K562 (cell line): ENCODE measurements at regions of chr10 and their contacts with region 1.

Region 1: DNA sequence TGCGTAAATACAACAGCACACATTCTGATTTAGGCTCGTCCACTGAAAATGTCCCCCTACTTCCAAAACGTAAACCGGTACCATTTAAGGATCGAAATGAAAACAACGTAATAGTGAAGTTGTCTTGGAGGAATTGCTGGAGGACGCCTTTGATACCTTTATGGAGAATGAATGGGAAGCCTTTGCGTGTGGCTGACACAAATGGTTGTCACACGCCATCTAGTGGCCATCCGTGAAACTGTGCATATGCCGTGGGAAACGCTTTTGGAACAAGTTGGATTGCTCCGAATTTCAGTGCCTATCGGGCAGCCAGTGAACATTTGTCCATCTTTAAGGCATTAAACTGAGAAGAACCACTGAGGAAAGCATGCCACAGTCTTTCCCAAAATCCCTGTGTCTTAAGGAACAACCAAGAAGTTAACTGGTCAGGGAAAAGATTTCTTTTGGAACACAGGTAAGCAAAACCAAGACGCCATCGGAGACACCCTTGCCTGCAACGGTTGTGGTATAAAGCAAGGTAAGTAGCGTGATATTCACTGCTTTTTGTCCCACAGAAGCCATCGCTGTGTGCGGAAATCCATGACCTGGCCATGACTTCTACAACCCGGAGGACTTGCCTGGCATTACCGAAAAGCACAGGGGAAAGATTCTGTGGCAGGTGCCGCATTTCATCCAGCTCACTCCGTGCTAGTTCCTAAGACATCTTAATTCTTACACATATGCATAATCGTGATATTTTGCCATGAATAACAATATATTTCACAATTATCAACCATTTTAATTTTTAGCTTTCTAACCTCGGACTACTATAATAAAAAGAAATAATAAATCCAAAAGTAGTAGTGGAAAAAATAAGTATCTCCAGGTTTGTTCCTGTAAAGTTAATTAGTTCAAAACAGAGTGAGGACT is 100.6 kb downstream of the FAM204A start:
- DNase-seq: peak; percentile 33 to 74 (median 40)
- ATAC-seq: peak; percentile 70; the same call in 2 of the 3 replicates
- H3K4me3 ChIP-seq: no peak overlapping the region
- H3K27ac ChIP-seq: no peak overlapping the region
- H3K4me1 ChIP-seq: no peaks in the 10 kb centered on the region
- H3K27me3 ChIP-seq: peaks cover 2 to 21% of the 10 kb centered on the region in 2 experiments; a peak in 3 of 5 replicates
- CTCF ChIP-seq: peak; percentile 68 to 82 (median 78)
- EP300 ChIP-seq: no peak
- POLR2A ChIP-seq: no peak
- RAD21 ChIP-seq: peak; percentile 79 to 87

Region 2: DNA sequence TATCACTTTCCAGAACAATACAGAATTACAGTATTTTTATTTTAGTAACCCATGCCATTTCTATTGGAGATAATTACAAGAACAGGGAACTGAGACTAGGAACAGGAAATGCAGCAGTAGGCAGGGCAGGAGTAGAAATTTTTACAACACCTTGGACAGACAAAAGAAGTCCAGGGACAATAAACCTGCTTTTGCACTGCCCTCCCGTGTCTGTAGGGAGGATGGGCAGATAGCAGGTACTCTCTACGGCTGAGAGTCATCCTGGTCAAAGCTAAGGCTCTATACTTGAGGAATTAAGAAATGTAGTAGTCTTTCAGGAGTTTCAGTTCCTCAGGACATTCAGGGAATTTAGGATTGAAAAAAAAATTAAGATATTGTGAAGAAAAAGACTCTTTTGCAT is 1166.9 kb before region 1 on chr10:
- CTCF ChIA-PET with region 1: no interaction called
- POLR2A ChIA-PET with region 1: no interaction called
- in situ Hi-C with region 1: no loop called
- intact Hi-C with region 1: no loop called
- DNase-seq: no peak
- ATAC-seq: peak; percentile 51; the same call in 1 of the 3 replicates
- H3K4me3 ChIP-seq: no peak overlapping the region
- H3K27ac ChIP-seq: no peak overlapping the region
- H3K4me1 ChIP-seq: no peaks in the 10 kb centered on the region; a peak in 1 of 5 replicates
- H3K27me3 ChIP-seq: peaks cover 3 to 4% of the 10 kb centered on the region in 2 experiments; a peak in 2 of 5 replicates
- CTCF ChIP-seq: peak in 2 of 3 experiments; percentile 23 to 40; a peak in 2 of 6 replicates
- EP300 ChIP-seq: no peak
- POLR2A ChIP-seq: no peak
- RAD21 ChIP-seq: no peak

Region 3: GRCh38 chr10:117216611-117217195 is 1024.8 kb before region 1 on chr10:
- CTCF ChIA-PET with region 1: interaction called, 3 read pairs
- POLR2A ChIA-PET with region 1: no interaction called
- in situ Hi-C with region 1: loop called (anchors 25 kb)
- intact Hi-C with region 1: no loop called
- DNase-seq: peak; percentile 72 to 85 (median 82)
- ATAC-seq: peak; percentile 95
- H3K4me3 ChIP-seq: peak overlapping the region; percentile 26
- H3K27ac ChIP-seq: no peak overlapping the region
- H3K4me1 ChIP-seq: peaks cover 0 to 19% of the 10 kb centered on the region in 2 experiments; a peak in 3 of 5 replicates
- H3K27me3 ChIP-seq: peaks cover 5 to 33% of the 10 kb centered on the region in 2 experiments; a peak in 4 of 5 replicates
- CTCF ChIP-seq: peak; percentile 94 to 100 (median 100)
- EP300 ChIP-seq: no peak
- POLR2A ChIP-seq: no peak
- RAD21 ChIP-seq: peak; percentile 92 to 96

Region 4: GRCh38 chr10:117496616-117497028 is 744.9 kb before region 1 on chr10:
- CTCF ChIA-PET with region 1: interaction called, 3 read pairs
- POLR2A ChIA-PET with region 1: no interaction called
- in situ Hi-C with region 1: no loop called
- intact Hi-C with region 1: loop called (anchors 2 kb)
- DNase-seq: peak; percentile 67 to 81 (median 72)
- ATAC-seq: peak; percentile 97
- H3K4me3 ChIP-seq: no peak overlapping the region
- H3K27ac ChIP-seq: no peak overlapping the region
- H3K4me1 ChIP-seq: no peaks in the 10 kb centered on the region; a peak in 2 of 5 replicates
- H3K27me3 ChIP-seq: peaks cover under 1 to 33% of the 10 kb centered on the region in 2 experiments; a peak in 4 of 5 replicates
- CTCF ChIP-seq: peak; percentile 84 to 90 (median 88)
- EP300 ChIP-seq: no peak
- POLR2A ChIP-seq: no peak
- RAD21 ChIP-seq: peak; percentile 82 to 88

Region 5: GRCh38 chr10:117537436-117537903 is 704.0 kb before region 1 on chr10:
- CTCF ChIA-PET with region 1: interaction called, 10 read pairs
- POLR2A ChIA-PET with region 1: no interaction called
- in situ Hi-C with region 1: loop called (anchors 25 kb)
- intact Hi-C with region 1: loop called (anchors 2 kb)
- DNase-seq: peak; percentile 30 to 77 (median 74)
- ATAC-seq: peak; percentile 90
- H3K4me3 ChIP-seq: no peak overlapping the region
- H3K27ac ChIP-seq: no peak overlapping the region
- H3K4me1 ChIP-seq: peaks cover 0 to 40% of the 10 kb centered on the region in 2 experiments; a peak in 2 of 5 replicates
- H3K27me3 ChIP-seq: peaks cover 15 to 90% of the 10 kb centered on the region in 2 experiments
- CTCF ChIP-seq: peak in 2 of 3 experiments; percentile 61 to 72
- EP300 ChIP-seq: no peak
- POLR2A ChIP-seq: no peak
- RAD21 ChIP-seq: peak; percentile 57 to 71

Region 6: DNA sequence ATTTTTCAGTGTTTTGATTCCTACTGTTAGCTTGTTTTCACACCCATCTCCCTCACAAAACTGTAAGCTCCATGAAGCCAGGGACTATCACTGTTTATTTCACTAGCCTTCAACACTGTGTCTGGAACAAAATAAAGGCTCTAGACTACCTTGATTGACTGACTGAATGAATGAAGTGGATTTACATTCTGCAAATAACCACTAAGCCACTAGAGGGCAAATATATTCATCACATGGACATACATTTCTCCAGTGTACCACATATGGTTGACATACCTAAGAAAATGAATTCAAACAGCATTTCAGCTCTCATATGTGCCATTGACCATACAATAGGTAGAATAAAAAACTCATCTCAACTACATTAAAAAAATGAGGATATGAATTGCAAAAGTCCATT is 380.7 kb before region 1 on chr10:
- CTCF ChIA-PET with region 1: interaction called, 4 read pairs
- POLR2A ChIA-PET with region 1: no interaction called
- in situ Hi-C with region 1: no loop called
- intact Hi-C with region 1: loop called (anchors 5 kb)
- DNase-seq: peak; percentile 13 to 28 (median 24)
- ATAC-seq: peak; percentile 66; the same call in 2 of the 3 replicates
- H3K4me3 ChIP-seq: no peak overlapping the region
- H3K27ac ChIP-seq: no peak overlapping the region
- H3K4me1 ChIP-seq: no peaks in the 10 kb centered on the region
- H3K27me3 ChIP-seq: no peaks in the 10 kb centered on the region
- CTCF ChIP-seq: peak in 2 of 3 experiments; percentile 42 to 48; a peak in 5 of 6 replicates
- EP300 ChIP-seq: no peak
- POLR2A ChIP-seq: no peak
- RAD21 ChIP-seq: peak; percentile 31 to 70

Region 7: GRCh38 chr10:118062798-118063238 is 178.7 kb before region 1 on chr10:
- CTCF ChIA-PET with region 1: no interaction called
- POLR2A ChIA-PET with region 1: no interaction called
- in situ Hi-C with region 1: no loop called
- intact Hi-C with region 1: no loop called
- DNase-seq: no peak
- ATAC-seq: no peak
- H3K4me3 ChIP-seq: no peak overlapping the region
- H3K27ac ChIP-seq: no peak overlapping the region
- H3K4me1 ChIP-seq: no peaks in the 10 kb centered on the region; a peak in 1 of 5 replicates
- H3K27me3 ChIP-seq: no peaks in the 10 kb centered on the region
- CTCF ChIP-seq: no peak
- EP300 ChIP-seq: no peak
- POLR2A ChIP-seq: no peak
- RAD21 ChIP-seq: no peak